HEK293T (cell line): ENCODE measurements at regions of chr15 and their contacts with region 1.

Region 1: DNA sequence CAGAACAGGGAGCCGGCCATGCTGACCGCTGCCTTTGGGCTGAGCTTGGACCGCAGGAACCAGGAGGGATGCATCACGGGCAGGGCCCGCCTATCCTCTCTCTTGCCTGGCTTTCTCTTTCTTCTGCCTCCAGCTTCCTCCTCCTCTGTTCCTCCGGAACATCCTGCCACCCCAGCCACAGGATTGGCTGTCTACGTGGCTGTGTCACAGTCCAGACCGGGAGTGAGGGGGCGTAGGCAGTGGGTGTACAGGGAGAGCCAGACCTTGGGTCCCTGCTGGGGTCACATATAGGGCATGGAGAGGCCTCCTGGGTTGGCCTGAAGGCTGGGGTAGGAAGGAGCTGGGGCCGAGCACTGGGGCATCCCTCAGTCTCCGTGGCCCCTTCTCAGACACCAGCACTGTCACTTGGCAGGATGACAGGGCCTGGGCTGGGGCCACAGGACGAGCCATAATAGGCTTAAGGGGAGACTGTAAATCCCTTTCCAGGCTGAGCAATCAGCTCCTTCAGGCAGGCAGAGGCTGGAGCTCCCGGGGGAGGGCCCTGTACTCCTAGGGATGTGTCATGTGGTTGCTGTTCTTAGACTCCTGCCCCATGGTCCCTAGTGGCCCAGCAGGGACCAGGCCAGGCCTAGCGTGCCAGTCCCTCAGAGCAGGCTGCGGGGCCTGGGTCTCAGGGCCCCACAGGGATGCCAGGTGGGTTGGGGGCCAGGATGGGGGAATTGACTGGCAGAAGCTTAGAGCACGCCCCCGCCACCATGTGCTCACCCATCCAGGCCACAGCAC is 25.4 kb downstream of the LINGO1 start:
- DNase-seq: no peak

Region 2: GRCh38 chr15:77455696-77456321 is 151.5 kb before region 1 on chr15:
- CTCF ChIA-PET with region 1: no interaction called
- POLR2A ChIA-PET with region 1: no interaction called
- DNase-seq: no peak

Region 3: DNA sequence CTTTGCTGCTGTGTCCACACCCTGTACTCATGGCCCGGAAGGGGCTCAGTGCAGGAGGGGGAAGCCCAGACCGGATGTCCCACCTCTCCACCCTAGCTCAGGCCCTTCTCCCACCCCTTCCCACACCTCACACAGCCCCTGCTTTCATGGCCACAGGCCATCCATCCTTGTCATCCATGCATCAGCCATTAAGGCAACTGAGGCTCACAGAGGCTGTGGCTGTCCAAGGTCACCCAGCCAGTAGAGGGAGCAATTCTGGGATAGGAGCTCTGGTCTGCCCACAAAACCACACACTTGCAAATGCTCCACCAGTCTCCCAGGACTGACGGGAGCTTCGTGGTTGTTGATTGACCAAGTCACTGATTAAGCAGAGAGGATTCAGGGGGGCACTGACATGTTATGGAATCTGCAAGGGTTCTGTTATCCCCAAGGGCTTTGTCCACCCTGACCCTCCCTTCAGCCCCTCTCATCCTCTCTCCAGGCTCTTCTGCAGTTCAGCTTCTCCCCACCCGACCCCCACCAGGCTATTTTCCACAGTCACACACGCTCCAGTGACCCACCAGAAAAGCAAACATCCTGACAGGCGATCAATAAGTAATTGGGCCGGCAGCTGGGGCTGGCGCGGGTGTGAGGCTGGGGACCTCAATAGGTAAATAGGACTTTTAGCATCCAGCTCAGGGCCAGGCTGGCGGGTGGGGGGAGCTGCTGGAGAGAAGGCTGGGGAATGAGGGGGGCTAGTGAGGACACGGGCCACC is 10.4 kb after region 1 on chr15:
- CTCF ChIA-PET with region 1: interaction called, 65 read pairs
- POLR2A ChIA-PET with region 1: interaction called, 9 read pairs
- DNase-seq: peak; percentile 69

Region 4: DNA sequence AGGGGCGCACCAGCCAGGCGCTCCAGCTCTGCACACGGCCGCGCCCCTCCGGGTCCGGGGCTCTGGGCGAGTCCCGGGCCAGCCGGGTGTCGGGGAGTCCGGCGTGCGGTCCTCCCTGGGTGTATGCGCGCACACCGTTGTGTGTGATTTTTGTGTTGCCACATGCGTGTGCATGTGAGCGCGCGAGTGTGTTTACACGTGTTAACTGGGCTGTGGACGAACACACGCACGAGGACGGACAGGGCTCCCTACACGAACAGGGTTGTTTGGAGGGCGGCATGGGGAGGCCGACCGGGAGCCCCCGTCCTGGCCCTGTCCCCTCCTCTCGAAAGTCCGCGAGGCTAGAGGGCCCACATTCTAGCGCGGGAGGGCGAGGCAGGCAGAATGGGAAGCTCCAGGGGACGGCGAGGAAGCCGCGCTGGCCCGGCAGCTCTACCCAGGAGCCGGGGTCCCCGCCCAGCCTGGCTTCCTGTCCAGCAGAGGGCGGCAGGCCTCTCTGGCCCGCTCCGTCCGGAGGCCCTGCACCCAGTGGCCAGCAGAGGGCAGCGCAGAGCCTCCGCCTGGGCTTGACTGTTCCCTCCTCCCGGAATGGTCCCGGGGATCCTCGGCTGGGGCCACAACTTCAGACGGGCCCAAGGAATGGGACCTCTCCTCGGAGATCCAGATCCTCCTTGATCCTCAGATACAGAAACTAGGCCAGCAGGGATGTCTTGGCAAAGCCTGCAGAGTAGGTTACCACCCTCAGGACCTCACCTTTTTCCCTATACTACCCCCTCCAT is 26.0 kb after region 1 on chr15:
- CTCF ChIA-PET with region 1: interaction called, 15 read pairs
- POLR2A ChIA-PET with region 1: interaction called, 6 read pairs
- DNase-seq: peak; percentile 94